ENCODE measurements at regions of chr7 and their contacts with region 1.

Region 1: GRCh38 chr7:132292803-132293202 is 283.5 kb downstream of the PLXNA4 start:
- DNase-seq: no peak
- H3K4me3 ChIP-seq: no peak overlapping the region
- H3K27ac ChIP-seq: no peak overlapping the region
- H3K4me1 ChIP-seq: no peaks in the 10 kb centered on the region
- CTCF ChIP-seq: no peak

Region 2: GRCh38 chr7:130970196-130970595 is 1322.6 kb before region 1 on chr7:
- CTCF ChIA-PET with region 1: no interaction called
- POLR2A ChIA-PET with region 1: interaction called, 10 read pairs
- intact Hi-C with region 1: no loop called
- DNase-seq: no peak
- H3K4me3 ChIP-seq: no peak overlapping the region
- H3K27ac ChIP-seq: no peak overlapping the region
- H3K4me1 ChIP-seq: peaks cover 11% of the 10 kb centered on the region
- CTCF ChIP-seq: no peak

Region 3: DNA sequence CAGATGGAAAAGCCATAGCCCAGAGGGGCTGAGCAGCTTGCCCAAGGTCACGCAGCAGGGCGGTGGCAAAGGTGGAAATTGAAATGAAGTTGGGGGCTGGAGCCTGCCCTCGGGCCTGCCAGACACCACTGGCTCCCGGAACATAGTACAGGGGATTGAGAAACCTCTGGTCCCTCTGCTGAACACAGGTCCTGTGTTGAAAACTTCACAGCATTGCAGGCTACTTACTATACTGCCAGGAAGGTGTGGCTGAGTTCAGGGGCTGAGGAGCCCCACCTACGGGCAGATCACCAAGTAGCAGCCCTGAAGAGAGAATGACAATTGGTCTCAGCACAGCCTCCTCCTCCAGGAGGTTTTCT is 43.2 kb before region 1 on chr7:
- CTCF ChIA-PET with region 1: no interaction called
- POLR2A ChIA-PET with region 1: no interaction called
- intact Hi-C with region 1: no loop called
- DNase-seq: no peak
- H3K4me3 ChIP-seq: no peak overlapping the region
- H3K27ac ChIP-seq: no peak overlapping the region
- H3K4me1 ChIP-seq: no peaks in the 10 kb centered on the region
- CTCF ChIP-seq: peak; percentile 41